HCT116 (cell line): ENCODE measurements at regions of chr11 and their contacts with region 1.

Region 1: DNA sequence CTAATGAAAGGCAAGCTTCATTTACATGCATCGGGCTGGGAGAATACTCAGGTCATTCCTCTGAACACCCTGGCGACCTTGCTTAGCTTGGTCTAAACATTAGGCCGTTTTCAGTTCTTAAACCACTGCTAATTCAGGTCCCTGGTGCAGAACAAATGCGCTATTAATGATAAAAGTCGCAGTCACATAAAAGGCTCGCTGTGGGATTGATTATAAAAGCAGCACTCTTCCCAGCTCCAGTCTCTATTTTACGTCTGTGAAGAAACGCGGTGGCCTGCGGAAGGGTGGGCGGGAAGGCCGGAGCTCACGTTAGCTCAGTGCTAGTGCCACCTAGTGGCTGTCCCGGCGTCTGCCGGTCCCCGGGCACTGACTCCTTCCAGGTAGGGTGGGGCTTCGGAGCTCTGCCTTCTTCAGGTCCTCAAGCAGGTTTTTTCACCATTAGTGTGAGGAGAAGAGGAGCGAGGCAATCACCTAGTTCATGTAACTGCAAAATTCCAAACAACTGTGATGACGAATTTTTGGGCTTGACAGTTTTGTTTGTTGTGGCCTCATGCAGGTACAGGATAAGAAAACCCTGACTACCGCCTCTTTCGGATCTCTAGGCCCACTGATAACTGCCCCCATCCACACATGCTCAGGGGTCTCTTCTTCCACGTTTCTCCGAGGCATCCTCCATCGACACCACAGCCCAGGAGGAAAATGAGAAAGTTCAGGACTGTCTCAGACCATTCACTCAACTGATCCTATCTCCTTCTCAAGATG is 66.5 kb upstream of the CLMP start:
- DNase-seq: peak; percentile 62
- ATAC-seq: peak; percentile 100
- H3K4me3 ChIP-seq: peak overlapping the region in 1 of 2 experiments; percentile 18; a peak in 1 of 4 replicates
- H3K27ac ChIP-seq: no peak overlapping the region
- H3K4me1 ChIP-seq: peaks cover 0 to 5% of the 10 kb centered on the region in 2 experiments; a peak in 2 of 4 replicates
- H3K27me3 ChIP-seq: peaks cover 10% of the 10 kb centered on the region; the same call in 1 of the 2 replicates
- CTCF ChIP-seq: peak; percentile 85 to 98 (median 96)
- POLR2A ChIP-seq: no peak
- RAD21 ChIP-seq: peak; percentile 77

Region 2: GRCh38 chr11:123103326-123103980 is 158.1 kb before region 1 on chr11:
- CTCF ChIA-PET with region 1: interaction called, 47 read pairs
- POLR2A ChIA-PET with region 1: no interaction called
- RAD21 ChIA-PET with region 1: interaction called in 1 of 2 experiments, 7 read pairs
- intact Hi-C with region 1: no loop called
- DNase-seq: peak; percentile 60
- ATAC-seq: peak; percentile 81
- H3K4me3 ChIP-seq: no peak overlapping the region
- H3K27ac ChIP-seq: no peak overlapping the region
- H3K4me1 ChIP-seq: peaks cover 0 to 6% of the 10 kb centered on the region in 2 experiments; a peak in 3 of 4 replicates
- H3K27me3 ChIP-seq: no peaks in the 10 kb centered on the region
- CTCF ChIP-seq: peak; percentile 70 to 76 (median 75)
- POLR2A ChIP-seq: no peak
- RAD21 ChIP-seq: peak; percentile 84

Region 3: GRCh38 chr11:123110356-123110755 is 151.2 kb before region 1 on chr11:
- CTCF ChIA-PET with region 1: interaction called, 47 read pairs
- POLR2A ChIA-PET with region 1: no interaction called
- RAD21 ChIA-PET with region 1: interaction called in 1 of 2 experiments, 4 read pairs
- intact Hi-C with region 1: no loop called
- DNase-seq: no peak
- ATAC-seq: no peak
- H3K4me3 ChIP-seq: no peak overlapping the region
- H3K27ac ChIP-seq: no peak overlapping the region
- H3K4me1 ChIP-seq: peaks cover 0 to 3% of the 10 kb centered on the region in 2 experiments; a peak in 2 of 4 replicates
- H3K27me3 ChIP-seq: no peaks in the 10 kb centered on the region
- CTCF ChIP-seq: no peak
- POLR2A ChIP-seq: no peak
- RAD21 ChIP-seq: no peak

Region 4: GRCh38 chr11:123286761-123287160 is 25.2 kb after region 1 on chr11:
- CTCF ChIA-PET with region 1: no interaction called
- POLR2A ChIA-PET with region 1: no interaction called
- RAD21 ChIA-PET with region 1: no interaction called
- intact Hi-C with region 1: no loop called
- DNase-seq: no peak
- ATAC-seq: no peak
- H3K4me3 ChIP-seq: no peak overlapping the region
- H3K27ac ChIP-seq: no peak overlapping the region
- H3K4me1 ChIP-seq: no peaks in the 10 kb centered on the region
- H3K27me3 ChIP-seq: peaks cover 28% of the 10 kb centered on the region
- CTCF ChIP-seq: no peak
- POLR2A ChIP-seq: no peak
- RAD21 ChIP-seq: no peak